MCF 10A (cell line): ENCODE measurements at regions of chr14 and their contacts with region 1.

Region 1: DNA sequence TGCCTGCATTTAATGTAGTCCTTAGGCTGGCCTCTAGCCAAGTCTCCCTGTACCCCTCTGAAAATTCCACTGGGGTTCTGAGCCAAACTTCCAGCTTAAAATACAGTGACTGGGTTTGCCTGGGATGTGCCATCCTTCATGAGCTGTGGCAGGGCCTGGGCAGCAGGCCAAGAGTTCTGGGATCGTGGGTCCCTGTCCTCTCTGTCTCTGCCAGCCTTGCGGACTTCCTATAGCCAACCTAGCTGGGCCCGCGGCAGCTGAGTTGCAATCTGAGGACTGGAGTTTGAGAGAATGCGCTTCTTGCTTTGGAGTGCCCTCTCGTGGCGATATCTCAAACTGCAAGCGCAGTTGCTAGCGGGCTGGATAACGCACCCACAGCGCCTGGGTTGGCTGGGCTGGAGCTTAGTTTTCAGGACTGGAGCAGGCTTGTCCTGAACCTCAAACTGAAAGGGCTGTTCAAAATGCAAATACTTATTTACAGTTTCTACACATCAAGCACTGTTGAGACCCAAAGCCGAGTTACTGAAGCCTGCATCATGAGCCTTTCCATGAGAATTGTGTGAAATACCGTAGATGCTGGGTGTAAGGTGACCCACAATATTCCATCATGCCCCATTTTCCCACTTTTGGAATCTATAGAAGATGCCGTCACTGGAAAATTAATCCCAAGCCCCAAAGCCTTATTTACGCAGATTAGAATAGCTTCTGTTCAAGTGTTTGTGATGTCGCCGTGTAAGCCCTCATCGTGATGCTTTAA is 7.3 kb upstream of the IFI27L2 start:
- DNase-seq: peak; percentile 82
- H3K4me3 Mint-ChIP-seq: no peak overlapping the region
- H3K27ac Mint-ChIP-seq: no peak overlapping the region
- H3K4me1 Mint-ChIP-seq: no peaks in the 10 kb centered on the region
- H3K27me3 Mint-ChIP-seq: no peaks in the 10 kb centered on the region
- CTCF ChIP-seq: peak; percentile 94

Region 2: GRCh38 chr14:93939304-93940229 is 197.2 kb before region 1 on chr14:
- CTCF ChIA-PET with region 1: interaction called, 6 read pairs
- POLR2A ChIA-PET with region 1: no interaction called
- intact Hi-C with region 1: loop called (anchors 5 kb)
- DNase-seq: peak; percentile 74
- H3K4me3 Mint-ChIP-seq: no peak overlapping the region
- H3K27ac Mint-ChIP-seq: no peak overlapping the region
- H3K4me1 Mint-ChIP-seq: peaks cover 16% of the 10 kb centered on the region
- H3K27me3 Mint-ChIP-seq: no peaks in the 10 kb centered on the region
- CTCF ChIP-seq: peak; percentile 89

Region 3: DNA sequence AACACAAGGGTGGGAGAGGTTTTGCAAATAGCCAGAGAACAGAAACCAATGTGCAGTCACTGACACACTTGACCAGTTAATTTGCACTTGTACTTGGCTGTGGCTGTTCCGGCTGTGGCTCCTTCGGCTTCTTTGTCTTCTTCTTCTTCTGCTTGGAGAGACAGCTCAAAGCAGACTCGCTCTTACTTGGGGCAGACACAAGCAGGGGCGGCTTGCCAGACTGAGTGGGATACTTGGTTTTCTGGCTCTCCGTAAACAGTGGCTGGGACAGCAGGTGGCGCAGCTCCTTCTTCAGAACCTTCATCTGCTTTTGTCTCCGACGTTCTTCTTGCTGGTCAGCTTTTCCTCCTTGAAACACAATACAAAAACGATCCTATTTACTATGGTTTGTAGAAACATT is 85.6 kb before region 1 on chr14:
- CTCF ChIA-PET with region 1: interaction called, 22 read pairs
- POLR2A ChIA-PET with region 1: no interaction called
- intact Hi-C with region 1: loop called (anchors 5 kb)
- DNase-seq: peak; percentile 28
- H3K4me3 Mint-ChIP-seq: no peak overlapping the region
- H3K27ac Mint-ChIP-seq: no peak overlapping the region
- H3K4me1 Mint-ChIP-seq: no peaks in the 10 kb centered on the region
- H3K27me3 Mint-ChIP-seq: no peaks in the 10 kb centered on the region
- CTCF ChIP-seq: peak; percentile 32

Region 4: GRCh38 chr14:94180655-94181271 is 44.0 kb after region 1 on chr14:
- CTCF ChIA-PET with region 1: interaction called, 37 read pairs
- POLR2A ChIA-PET with region 1: interaction called, 5 read pairs
- intact Hi-C with region 1: loop called (anchors 1 kb)
- DNase-seq: peak; percentile 55
- H3K4me3 Mint-ChIP-seq: peak overlapping the region; percentile 35
- H3K27ac Mint-ChIP-seq: peak overlapping the region; percentile 2
- H3K4me1 Mint-ChIP-seq: peaks cover 18% of the 10 kb centered on the region
- H3K27me3 Mint-ChIP-seq: no peaks in the 10 kb centered on the region
- CTCF ChIP-seq: peak; percentile 34

Region 5: GRCh38 chr14:94689218-94689984 is 552.6 kb after region 1 on chr14:
- CTCF ChIA-PET with region 1: no interaction called
- POLR2A ChIA-PET with region 1: no interaction called
- intact Hi-C with region 1: loop called (anchors 10 kb)
- DNase-seq: peak; percentile 50
- H3K4me3 Mint-ChIP-seq: no peak overlapping the region
- H3K27ac Mint-ChIP-seq: no peak overlapping the region
- H3K4me1 Mint-ChIP-seq: no peaks in the 10 kb centered on the region
- H3K27me3 Mint-ChIP-seq: no peaks in the 10 kb centered on the region
- CTCF ChIP-seq: peak; percentile 96